ENCODE measurements at regions of chr6 and their contacts with region 1.

Region 1: DNA sequence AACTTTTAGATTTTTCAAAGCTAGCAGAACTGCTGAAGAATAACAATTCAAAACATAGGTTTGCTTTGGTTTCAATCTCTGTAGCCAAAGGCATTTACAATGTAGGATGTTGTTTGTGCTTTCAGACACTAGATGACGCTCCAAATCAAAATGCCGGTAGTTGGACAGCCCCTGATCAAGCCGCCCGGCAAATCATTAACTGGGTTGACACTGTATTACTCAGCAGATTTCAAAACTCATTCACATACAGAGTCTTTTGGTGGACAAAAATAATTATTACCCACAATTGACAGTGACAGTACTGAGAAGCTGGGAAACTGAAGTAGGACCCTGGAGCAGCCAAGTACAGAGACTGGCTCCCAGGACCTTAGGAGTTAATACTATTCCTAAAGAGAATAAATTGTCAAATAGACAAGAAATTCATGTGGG is 21.3 kb upstream of the HFE start:
- DNase-seq: peak; percentile 79
- CTCF ChIP-seq: peak; percentile 71

Region 2: GRCh38 chr6:25913741-25914140 is 152.2 kb before region 1 on chr6:
- CTCF ChIA-PET with region 1: no interaction called
- POLR2A ChIA-PET with region 1: no interaction called
- DNase-seq: no peak
- CTCF ChIP-seq: no peak

Region 3: DNA sequence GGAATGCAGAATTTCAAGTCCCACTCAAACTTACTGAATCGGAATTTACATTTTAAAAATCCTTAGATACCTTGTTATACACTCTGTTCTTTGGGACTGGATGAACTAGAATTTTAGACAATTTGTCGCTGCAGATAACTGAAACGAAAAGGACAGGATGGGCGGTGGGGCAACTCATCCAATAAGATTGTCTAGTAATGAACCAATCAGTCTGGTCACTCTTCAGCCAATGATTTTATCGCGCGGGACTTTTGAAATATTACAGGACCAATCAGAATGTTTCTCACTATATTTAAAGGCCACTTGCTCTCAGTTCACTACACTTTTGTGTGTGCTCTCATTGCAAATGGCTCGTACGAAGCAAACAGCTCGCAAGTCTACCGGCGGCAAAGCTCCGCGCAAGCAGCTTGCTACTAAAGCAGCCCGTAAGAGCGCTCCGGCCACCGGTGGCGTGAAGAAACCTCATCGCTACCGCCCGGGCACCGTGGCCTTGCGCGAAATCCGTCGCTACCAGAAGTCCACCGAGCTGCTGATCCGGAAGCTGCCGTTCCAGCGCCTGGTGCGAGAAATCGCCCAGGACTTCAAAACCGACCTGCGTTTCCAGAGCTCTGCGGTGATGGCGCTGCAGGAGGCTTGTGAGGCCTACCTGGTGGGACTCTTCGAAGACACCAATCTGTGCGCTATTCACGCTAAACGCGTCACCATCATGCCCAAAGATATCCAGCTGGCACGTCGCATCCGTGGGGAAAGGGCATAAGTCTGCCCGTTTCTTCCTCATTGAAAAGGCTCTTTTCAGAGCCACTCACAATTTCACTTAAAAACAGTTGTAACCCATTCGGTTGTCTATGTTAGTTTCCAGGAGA is 20.7 kb before region 1 on chr6:
- CTCF ChIA-PET with region 1: interaction called, 21 read pairs
- POLR2A ChIA-PET with region 1: interaction called, 4 read pairs
- DNase-seq: peak; percentile 88
- CTCF ChIP-seq: peak; percentile 12

Region 4: GRCh38 chr6:26087284-26088115 is 21.5 kb after region 1 on chr6 and contains the start of gene HFE:
- CTCF ChIA-PET with region 1: interaction called, 631 read pairs
- POLR2A ChIA-PET with region 1: no interaction called
- DNase-seq: peak; percentile 41
- CTCF ChIP-seq: no peak

Region 5: GRCh38 chr6:26097268-26097875 is 31.4 kb after region 1 on chr6:
- CTCF ChIA-PET with region 1: interaction called, 631 read pairs
- POLR2A ChIA-PET with region 1: no interaction called
- DNase-seq: peak; percentile 40
- CTCF ChIP-seq: peak; percentile 75

Region 6: GRCh38 chr6:26103770-26104456 is 37.9 kb after region 1 on chr6:
- CTCF ChIA-PET with region 1: interaction called, 631 read pairs
- POLR2A ChIA-PET with region 1: no interaction called
- DNase-seq: peak; percentile 78
- CTCF ChIP-seq: peak; percentile 52

Measured in GM10248 (cell line).